ENCODE measurements at regions of chr9 and their contacts with region 1.

Region 1: DNA sequence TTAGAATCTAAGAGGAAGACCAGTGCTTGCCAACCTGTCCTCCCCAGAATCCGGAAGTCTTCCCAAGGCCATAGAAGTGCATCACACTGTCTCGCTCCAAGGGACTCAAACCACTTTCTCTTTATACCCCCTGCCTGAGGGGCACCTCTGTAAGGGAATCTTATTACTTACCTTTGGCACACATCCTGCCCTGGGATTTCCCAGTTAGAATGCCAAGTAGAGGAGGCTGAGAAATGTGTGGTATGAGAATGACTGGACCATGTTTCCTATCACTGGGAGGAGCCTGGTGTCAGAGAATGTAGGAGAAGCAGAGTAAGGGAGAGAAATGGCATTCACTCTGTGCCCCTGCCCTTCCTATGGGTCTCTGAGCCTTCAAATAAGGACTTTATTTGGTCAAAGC is 85.8 kb downstream of the AOPEP start:
- DNase-seq: no peak
- H3K4me3 ChIP-seq: no peak overlapping the region
- H3K27ac ChIP-seq: peak overlapping the region; percentile 51 to 69
- H3K4me1 ChIP-seq: no peaks in the 10 kb centered on the region
- H3K27me3 ChIP-seq: no peaks in the 10 kb centered on the region
- CTCF ChIP-seq: no peak
- POLR2A ChIP-seq: no peak

Region 2: GRCh38 chr9:94860968-94861871 is 48.9 kb after region 1 on chr9:
- intact Hi-C with region 1: loop called (anchors 10 kb)
- DNase-seq: peak in 1 of 2 donors; percentile 40
- H3K4me3 ChIP-seq: no peak overlapping the region
- H3K27ac ChIP-seq: peak overlapping the region; percentile 80 to 97
- H3K4me1 ChIP-seq: peaks cover 5 to 7% of the 10 kb centered on the region in 2 donors
- H3K27me3 ChIP-seq: no peaks in the 10 kb centered on the region
- CTCF ChIP-seq: no peak
- POLR2A ChIP-seq: no peak

Region 3: DNA sequence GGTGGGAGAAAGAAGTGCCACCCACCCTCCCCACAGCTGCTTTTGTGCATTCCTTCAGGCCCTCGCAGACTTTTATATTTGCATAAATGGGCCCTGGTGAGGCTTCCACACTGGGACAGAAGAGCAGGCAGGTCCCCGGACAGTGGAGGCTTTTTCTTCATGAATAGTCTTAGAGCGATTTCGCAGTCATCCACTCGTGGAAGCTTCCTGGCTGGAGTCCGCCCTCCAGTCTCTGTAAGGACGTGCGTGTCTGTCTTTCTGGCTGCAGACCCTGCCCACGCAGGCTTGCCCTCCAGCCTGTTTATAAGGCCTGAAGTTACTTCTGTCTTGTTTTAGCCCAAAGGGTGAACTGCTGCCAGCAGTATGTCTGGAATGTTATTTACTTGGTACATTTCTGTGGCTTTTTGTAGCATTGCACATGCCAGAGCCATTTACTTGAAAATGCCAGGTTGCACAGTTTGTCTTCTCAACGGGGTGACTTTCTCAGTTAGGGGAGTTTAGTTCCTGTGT is 109.8 kb after region 1 on chr9:
- intact Hi-C with region 1: loop called (anchors 10 kb)
- DNase-seq: peak; percentile 52 to 64
- H3K4me3 ChIP-seq: no peak overlapping the region
- H3K27ac ChIP-seq: peak overlapping the region; percentile 93 to 95
- H3K4me1 ChIP-seq: peaks cover 18 to 27% of the 10 kb centered on the region in 2 donors
- H3K27me3 ChIP-seq: no peaks in the 10 kb centered on the region
- CTCF ChIP-seq: no peak
- POLR2A ChIP-seq: no peak